Mammary epithelial cell (primary cell): ENCODE measurements at regions of chr17 and their contacts with region 1.

Region 1: DNA sequence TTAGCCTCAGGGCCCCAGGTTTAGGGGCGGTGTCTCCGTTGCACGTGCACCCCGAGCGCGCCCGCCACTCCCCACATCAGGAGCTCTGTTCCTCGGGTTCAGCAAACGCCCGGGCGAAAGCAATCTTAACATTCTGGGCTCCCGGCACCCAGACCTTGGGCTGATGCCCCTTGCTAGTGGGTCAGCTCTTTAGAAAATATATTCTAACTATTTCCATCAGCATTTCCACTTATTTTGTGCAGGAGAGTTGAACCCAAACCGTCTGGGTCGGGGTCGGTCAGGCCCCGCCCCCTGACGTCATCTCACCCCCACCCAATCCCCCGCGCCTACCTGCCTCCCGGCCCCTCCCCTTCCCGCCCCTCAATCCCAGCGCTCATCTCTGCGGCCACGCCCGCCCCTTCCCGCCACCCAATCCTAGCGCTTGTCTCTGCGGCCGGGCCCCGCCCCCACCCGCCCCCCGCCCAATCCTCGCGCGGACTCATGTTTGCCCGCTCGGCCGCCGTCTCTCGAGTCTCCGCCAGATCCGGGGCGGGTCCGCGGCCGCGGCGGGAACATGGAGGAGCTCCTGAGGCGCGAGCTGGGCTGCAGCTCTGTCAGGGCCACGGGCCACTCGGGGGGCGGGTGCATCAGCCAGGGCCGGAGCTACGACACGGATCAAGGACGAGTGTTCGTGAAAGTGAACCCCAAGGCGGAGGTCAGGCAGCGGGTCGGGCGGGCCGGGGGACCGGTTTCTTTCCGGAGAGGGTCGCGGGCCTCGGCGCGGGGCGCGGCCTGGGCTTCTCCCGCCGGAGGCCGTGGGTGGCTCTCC is at the start of gene FN3KRP:
- DNase-seq: peak; percentile 91
- H3K4me3 ChIP-seq: peak within 1 kb of the TSS; percentile 63 to 88 (median 84)
- H3K27ac ChIP-seq: peak within 1 kb of the TSS; percentile 59
- H3K4me1 ChIP-seq: peaks cover 10% of the 10 kb centered on the region
- H3K27me3 ChIP-seq: no peaks in the 10 kb centered on the region
- CTCF ChIP-seq: no peak
- total RNA-seq, gene FN3KRP: 16.7 to 44.5 TPM

Region 2: DNA sequence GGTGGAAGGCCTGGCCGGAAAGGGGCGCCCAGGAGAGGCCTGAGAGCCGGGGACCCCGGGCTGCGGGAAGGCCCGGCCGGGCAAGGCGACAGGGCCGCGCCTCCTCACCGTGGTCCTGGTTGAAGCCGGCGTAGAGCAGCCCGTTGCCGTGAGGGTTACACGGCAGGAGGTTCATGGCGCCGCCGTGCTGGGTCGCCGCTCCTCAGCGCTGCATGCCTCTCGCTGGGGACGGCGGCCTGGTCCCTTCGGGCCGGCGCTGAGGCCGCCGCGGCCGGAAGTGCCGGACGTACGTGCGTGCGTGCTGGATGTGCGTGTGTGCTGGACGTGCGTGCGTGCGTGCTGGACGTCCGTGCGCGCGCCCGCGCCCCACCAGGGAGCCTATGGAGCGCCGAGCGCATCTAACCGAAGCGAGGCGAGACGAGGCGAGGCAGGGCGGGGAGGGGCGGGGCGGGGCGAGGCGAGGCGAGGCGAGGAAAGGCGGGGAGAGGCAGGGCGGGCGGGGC is 68.2 kb before region 1 on chr17 and contains the start of gene WDR45B:
- CTCF ChIA-PET with region 1: no interaction called
- dilution Hi-C with region 1: no loop called
- in situ Hi-C with region 1: no loop called
- intact Hi-C with region 1: loop called (anchors 1 kb)
- DNase-seq: peak; percentile 97
- H3K4me3 ChIP-seq: peak within 1 kb of the TSS; percentile 92 to 99 (median 98)
- H3K27ac ChIP-seq: peak within 1 kb of the TSS; percentile 91
- H3K4me1 ChIP-seq: peaks cover 18% of the 10 kb centered on the region
- H3K27me3 ChIP-seq: no peaks in the 10 kb centered on the region
- CTCF ChIP-seq: no peak
- total RNA-seq, gene WDR45B: 62.2 to 68.4 TPM

Region 3: DNA sequence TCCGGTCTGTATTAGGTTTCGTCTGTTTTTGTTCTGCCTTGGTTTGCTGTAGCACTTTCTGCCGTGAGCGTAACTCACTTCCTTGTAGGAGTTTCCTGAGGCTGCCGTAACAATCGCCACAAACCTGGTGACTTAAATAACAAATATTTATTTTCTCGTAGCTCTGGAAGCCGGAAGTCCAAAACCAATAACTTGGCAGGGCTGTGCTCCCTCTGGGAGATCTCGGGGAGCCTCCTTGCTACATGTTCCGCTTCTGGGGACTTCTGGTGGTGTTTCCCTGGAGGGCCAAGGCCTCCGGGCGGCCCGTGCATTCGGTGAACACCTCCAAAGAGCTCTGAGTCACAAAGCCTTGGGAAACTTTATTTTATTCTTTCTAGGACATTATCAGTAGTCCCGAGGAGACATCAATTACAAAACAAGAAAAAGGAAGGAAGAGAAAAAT is 61.3 kb before region 1 on chr17:
- CTCF ChIA-PET with region 1: interaction called, 12 read pairs
- dilution Hi-C with region 1: no loop called
- in situ Hi-C with region 1: no loop called
- intact Hi-C with region 1: no loop called
- DNase-seq: no peak
- H3K4me3 ChIP-seq: no peak overlapping the region
- H3K27ac ChIP-seq: no peak overlapping the region
- H3K4me1 ChIP-seq: no peaks in the 10 kb centered on the region
- H3K27me3 ChIP-seq: no peaks in the 10 kb centered on the region
- CTCF ChIP-seq: no peak

Region 4: GRCh38 chr17:82698065-82698973 is 18.1 kb before region 1 on chr17 and contains the start of gene RAB40B:
- CTCF ChIA-PET with region 1: no interaction called
- dilution Hi-C with region 1: no loop called
- in situ Hi-C with region 1: no loop called
- intact Hi-C with region 1: no loop called
- DNase-seq: peak; percentile 97
- H3K4me3 ChIP-seq: peak within 1 kb of the TSS; percentile 53 to 79 (median 73)
- H3K27ac ChIP-seq: no peak within 1 kb of the TSS
- H3K4me1 ChIP-seq: peaks cover 31% of the 10 kb centered on the region
- H3K27me3 ChIP-seq: no peaks in the 10 kb centered on the region
- CTCF ChIP-seq: no peak
- total RNA-seq, gene RAB40B: 13.3 to 17.8 TPM

Region 5: GRCh38 chr17:82734987-82735866 is 18.8 kb after region 1 on chr17 and contains the start of gene FN3K:
- CTCF ChIA-PET with region 1: no interaction called
- dilution Hi-C with region 1: no loop called
- in situ Hi-C with region 1: no loop called
- intact Hi-C with region 1: no loop called
- DNase-seq: peak; percentile 29
- H3K4me3 ChIP-seq: peak within 1 kb of the TSS; percentile 50 to 56 (median 52)
- H3K27ac ChIP-seq: no peak within 1 kb of the TSS
- H3K4me1 ChIP-seq: peaks cover 7% of the 10 kb centered on the region
- H3K27me3 ChIP-seq: no peaks in the 10 kb centered on the region
- CTCF ChIP-seq: no peak
- total RNA-seq, gene FN3K: 2.2 to 4.2 TPM

Region 6: DNA sequence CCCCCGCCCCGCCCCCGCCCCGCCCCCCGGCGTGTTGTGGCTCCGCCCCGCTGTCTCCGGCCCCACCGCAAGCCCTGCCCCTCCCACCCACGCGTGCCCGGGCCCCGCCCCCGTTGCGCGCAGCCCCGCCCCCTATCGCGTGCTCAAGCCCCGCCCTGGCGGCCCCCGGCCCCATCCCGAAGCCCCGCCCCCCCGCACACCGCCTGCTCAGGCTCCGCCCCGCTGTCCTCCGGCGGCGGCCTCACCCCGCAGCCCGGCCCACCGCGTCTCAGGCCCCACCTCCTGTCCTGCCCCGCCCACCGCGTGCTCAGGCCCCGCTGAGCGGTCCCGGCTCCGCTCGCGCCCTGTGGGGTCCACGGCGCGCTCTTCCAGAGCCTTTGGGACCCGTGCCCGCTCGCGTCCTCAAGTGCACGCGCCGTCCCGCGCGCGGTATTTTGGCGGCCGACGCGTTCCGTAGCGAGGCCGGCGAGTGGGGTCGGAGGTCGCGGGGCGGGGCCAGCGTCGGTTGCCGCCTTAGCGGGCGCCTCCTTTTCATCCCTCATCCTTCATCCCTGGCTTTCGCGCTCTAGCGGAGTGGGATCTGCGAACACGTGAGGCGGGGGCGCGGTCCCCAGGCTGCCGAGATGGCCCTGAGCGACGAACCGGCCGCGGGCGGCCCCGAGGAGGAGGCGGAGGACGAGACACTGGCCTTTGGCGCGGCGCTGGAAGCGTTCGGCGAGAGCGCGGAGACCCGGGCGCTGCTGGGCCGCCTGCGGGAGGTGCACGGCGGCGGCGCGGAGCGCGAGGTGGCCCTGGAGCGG is 35.4 kb after region 1 on chr17 and contains the start of gene TBCD:
- CTCF ChIA-PET with region 1: no interaction called
- dilution Hi-C with region 1: no loop called
- in situ Hi-C with region 1: no loop called
- intact Hi-C with region 1: loop called (anchors 5 kb)
- DNase-seq: peak; percentile 89
- H3K4me3 ChIP-seq: peak within 1 kb of the TSS; percentile 96 to 99 (median 97)
- H3K27ac ChIP-seq: peak within 1 kb of the TSS; percentile 66
- H3K4me1 ChIP-seq: peaks cover 11% of the 10 kb centered on the region
- H3K27me3 ChIP-seq: no peaks in the 10 kb centered on the region
- CTCF ChIP-seq: no peak
- total RNA-seq, gene TBCD: 28.7 to 90.9 TPM